ENCODE measurements at regions of chr10 and their contacts with region 1.

Region 1: DNA sequence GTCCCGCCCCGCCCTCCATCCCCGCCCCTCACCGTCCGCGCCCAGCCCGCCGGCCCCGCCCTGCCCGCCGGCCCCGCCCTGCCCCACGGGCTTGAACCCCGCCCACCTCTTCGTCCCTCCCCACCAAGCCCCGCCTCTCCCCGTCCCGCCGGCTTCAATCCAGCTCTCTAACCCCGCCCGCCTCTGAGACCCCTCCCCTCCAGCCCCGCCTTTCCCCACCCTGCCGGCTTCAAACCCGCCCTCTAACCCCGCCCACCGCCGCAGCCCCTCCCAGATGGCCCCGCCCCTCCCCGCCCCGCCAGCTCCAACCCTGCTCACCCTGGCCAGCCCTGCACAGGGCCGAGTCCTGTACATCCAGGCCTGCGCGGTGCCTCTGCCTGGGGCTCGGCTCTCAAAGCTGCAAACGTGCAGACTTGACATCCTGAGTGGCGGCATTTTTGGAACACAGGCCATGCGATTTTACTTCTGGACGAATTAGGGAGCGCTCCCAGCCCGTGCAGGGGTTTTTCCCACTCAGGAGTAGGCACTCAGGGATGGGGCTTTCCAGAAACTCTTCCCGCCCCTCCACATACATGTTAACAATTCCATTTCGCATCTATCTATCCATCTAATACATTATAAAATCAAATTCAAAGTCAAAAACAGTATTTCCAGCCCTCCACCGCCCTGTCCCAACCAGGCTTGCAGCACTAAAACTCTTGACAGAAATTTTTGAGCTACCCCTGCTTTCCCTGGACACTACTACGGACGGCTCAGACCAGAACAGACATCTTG is 475 bp upstream of the NMT2 start:
- DNase-seq: peak; percentile 94 to 97
- ATAC-seq: peak; percentile 83 to 85
- H3K4me3 ChIP-seq: peak overlapping the region; percentile 18 to 48 (median 38)
- H3K27ac ChIP-seq: peak overlapping the region; percentile 32 to 64 (median 52)
- H3K4me1 ChIP-seq: peaks cover 34 to 37% of the 10 kb centered on the region in 2 donors
- H3K27me3 ChIP-seq: no peaks in the 10 kb centered on the region
- CTCF ChIP-seq: no peak
- POLR2A ChIP-seq: no peak

Region 2: GRCh38 chr10:14837757-14838581 is 331.0 kb before region 1 on chr10 and contains the starts of genes CDNF, HSPA14 and MSANTD7:
- in situ Hi-C with region 1: no loop called
- intact Hi-C with region 1: loop called (anchors 2 kb)
- DNase-seq: peak; percentile 98 to 99
- ATAC-seq: peak; percentile 98 to 99
- H3K4me3 ChIP-seq: peak within 1 kb of the TSS; percentile 92 to 98 (median 94)
- H3K27ac ChIP-seq: peak within 1 kb of the TSS; percentile 92 to 98 (median 96)
- H3K4me1 ChIP-seq: peaks cover 22 to 26% of the 10 kb centered on the region in 2 donors
- H3K27me3 ChIP-seq: no peaks in the 10 kb centered on the region
- CTCF ChIP-seq: no peak
- POLR2A ChIP-seq: peak; percentile 81 to 93
- total RNA-seq, gene CDNF: 8.6 to 18.3 (median 10.9) TPM
- total RNA-seq, gene HSPA14: 17.7 to 25.5 (median 22.1) TPM
- total RNA-seq, gene MSANTD7: 4.7 to 8.5 (median 5.8) TPM

Region 3: DNA sequence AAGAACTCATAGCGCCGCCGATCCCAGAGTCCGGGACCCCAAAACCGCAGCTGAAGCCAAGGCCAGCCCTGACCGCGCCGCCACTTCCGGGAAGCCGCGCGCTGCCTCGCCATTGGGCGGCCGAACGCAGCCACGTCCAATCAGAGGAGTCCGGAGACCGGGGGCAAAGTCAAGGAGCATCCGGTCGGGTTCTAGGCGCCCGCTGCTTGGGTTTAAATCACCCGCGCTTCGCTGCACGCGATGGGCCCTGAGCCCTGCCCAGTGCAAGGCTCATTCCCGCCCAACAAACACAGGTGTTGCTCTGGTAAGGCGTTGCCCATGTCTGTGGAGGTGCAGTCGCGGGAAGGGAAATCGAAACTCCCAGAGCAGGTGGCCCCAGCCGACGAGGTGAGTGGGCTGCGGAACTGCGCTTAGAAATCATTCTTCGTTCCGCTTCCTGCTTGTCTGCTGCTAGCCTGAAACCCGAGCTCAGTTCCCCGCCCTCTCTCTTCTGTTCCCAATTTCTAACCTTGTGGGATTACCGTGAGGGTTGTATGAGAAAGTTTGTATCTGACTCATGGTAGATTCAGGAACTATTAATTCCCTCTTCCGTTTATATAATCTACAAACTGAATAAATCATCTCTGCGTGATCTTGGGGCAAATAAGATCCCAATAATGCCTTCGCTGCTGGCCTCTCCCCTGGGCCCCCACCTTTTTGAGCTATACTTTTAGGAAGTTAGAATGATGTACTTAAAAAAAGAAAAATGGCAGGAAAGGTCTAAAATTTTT is 214.8 kb before region 1 on chr10 and contains the start of gene DCLRE1C:
- in situ Hi-C with region 1: no loop called
- intact Hi-C with region 1: loop called (anchors 2 kb)
- DNase-seq: peak; percentile 83 to 87
- ATAC-seq: peak; percentile 96 to 97
- H3K4me3 ChIP-seq: peak within 1 kb of the TSS; percentile 79 to 92 (median 85)
- H3K27ac ChIP-seq: peak within 1 kb of the TSS; percentile 83 to 90 (median 84)
- H3K4me1 ChIP-seq: peaks cover 4 to 12% of the 10 kb centered on the region in 2 donors
- H3K27me3 ChIP-seq: no peaks in the 10 kb centered on the region
- CTCF ChIP-seq: no peak
- POLR2A ChIP-seq: peak in 1 of 2 donors; percentile 41
- total RNA-seq, gene DCLRE1C: 3.0 to 3.6 (median 3.3) TPM

Region 4: DNA sequence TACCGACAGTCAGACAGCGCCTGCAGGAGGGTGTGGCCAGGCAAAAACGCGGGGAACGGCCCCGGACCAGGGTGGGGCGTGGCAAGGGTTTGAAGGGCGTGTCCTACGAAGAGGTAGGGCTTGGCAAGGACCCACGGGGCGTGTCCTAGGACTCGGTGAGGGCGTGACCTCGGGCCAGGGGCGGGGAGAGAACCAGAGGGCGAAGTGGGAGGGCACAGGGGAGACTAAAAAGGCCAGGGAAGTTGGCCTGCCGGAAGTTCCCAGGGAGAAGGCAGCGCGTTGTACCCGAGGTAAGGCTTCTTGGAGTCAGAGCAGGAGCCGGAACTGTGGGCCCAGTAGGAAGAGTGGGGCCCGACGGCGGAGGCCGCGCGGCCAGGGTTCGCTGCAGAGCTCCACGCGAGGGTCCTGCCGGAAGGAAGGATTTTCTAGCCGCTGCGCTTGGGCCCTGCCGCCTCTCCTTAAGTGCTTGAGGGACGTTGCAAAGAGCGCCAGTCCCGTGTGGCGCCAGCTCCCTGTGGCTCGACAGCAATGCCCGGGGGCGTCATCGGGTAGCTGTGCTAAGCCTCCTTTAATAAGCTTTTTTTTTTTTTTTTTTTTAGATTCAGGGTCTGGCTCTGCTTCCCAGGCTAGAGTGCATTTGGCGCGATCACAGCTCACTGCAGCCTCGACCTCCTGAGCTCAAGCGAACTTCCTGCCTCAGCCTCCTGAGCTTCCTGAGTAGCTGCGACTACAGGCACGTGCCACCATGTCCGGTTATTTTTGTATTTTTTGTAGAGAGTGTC is 1268.0 kb after region 1 on chr10 and contains the start of gene PTER:
- in situ Hi-C with region 1: no loop called
- intact Hi-C with region 1: loop called (anchors 5 kb)
- DNase-seq: peak; percentile 95
- ATAC-seq: peak; percentile 94 to 96
- H3K4me3 ChIP-seq: peak within 1 kb of the TSS; percentile 62 to 68 (median 66)
- H3K27ac ChIP-seq: peak within 1 kb of the TSS; percentile 74 to 85 (median 81)
- H3K4me1 ChIP-seq: peaks cover 36 to 41% of the 10 kb centered on the region in 2 donors
- H3K27me3 ChIP-seq: no peaks in the 10 kb centered on the region
- CTCF ChIP-seq: no peak
- POLR2A ChIP-seq: peak; percentile 71 to 83
- total RNA-seq, gene PTER: 6.5 to 10.4 (median 8.5) TPM

Measured in gastrocnemius medialis (tissue), 4 donors.